Panc1 (cell line): ENCODE measurements at regions of chr17 and their contacts with region 1.

Region 1: DNA sequence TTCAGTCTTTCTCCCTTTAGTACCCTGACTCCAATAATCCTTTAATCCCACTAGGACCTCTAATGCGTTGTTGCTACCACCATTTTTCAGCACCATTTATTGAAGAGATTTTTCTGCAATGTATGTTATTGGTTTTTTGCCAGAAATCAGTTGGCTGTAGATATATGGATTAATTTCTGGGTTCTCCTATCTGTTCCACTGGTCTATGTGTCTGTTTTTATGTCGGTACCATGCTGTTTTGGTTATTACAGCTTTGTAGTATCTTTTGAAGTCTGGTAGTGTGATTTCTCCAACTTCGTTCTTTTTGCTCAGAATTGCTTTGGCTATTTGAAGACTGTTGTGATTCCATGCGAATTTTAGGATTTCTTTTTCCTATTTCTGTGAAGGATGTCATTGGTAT is 16.6 kb downstream of the TANC2 start:
- DNase-seq: no peak
- ATAC-seq: no peak
- H3K4me3 ChIP-seq: no peak overlapping the region
- H3K27ac ChIP-seq: no peak overlapping the region
- H3K4me1 ChIP-seq: peaks cover 3% of the 10 kb centered on the region; the same call in 1 of the 2 replicates
- H3K27me3 ChIP-seq: no peaks in the 10 kb centered on the region
- CTCF ChIP-seq: no peak

Region 2: DNA sequence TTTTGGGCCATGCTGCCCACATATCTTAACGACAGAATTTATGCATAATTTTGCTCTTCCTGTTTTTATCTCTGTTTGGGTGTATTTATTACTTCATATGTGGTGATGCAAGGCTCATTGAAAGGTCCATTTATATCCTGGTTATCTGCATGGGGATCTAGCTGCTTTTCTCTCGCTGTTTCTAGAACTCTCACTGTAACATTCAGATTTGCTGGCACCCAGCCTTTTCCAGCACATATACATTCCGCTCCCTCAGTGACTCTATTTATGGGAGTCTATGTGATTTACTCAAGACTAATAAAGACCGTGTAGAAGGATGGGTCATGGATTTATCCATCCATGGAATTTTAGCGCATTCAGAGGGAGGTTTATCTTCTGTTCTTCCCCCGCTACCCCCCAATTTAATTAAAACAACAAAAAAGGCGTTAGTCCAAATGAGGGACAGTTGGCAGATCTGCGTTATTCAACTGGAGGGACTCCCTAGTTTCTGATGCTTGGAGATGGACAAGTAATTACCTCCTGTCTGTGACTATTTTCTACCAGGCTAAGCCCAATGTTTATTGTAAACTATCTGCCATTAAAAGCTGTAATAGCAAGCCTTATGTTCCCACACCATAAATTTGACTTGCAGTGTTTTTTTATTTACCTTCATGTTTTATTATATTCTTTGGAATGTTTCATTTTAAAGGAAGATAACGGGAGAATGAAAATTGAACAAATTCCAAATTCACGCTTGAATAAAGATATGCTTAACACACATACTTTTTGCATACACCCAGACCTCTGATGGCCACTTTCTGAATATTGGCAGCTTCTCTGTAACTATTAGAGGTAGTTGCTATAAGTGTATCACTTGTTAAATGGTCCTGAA is 154.6 kb before region 1 on chr17:
- CTCF ChIA-PET with region 1: no interaction called
- POLR2A ChIA-PET with region 1: no interaction called
- in situ Hi-C with region 1: no loop called
- intact Hi-C with region 1: no loop called
- DNase-seq: no peak
- ATAC-seq: peak; percentile 82
- H3K4me3 ChIP-seq: peak overlapping the region; percentile 2 to 38; a peak in 2 of 4 replicates
- H3K27ac ChIP-seq: peak overlapping the region; percentile 75
- H3K4me1 ChIP-seq: peaks cover 26% of the 10 kb centered on the region
- H3K27me3 ChIP-seq: no peaks in the 10 kb centered on the region
- CTCF ChIP-seq: no peak

Region 3: GRCh38 chr17:63001451-63002312 is 19.1 kb after region 1 on chr17:
- CTCF ChIA-PET with region 1: no interaction called
- POLR2A ChIA-PET with region 1: interaction called, 10 read pairs
- in situ Hi-C with region 1: no loop called
- intact Hi-C with region 1: no loop called
- DNase-seq: no peak
- ATAC-seq: no peak
- H3K4me3 ChIP-seq: no peak overlapping the region
- H3K27ac ChIP-seq: no peak overlapping the region
- H3K4me1 ChIP-seq: peaks cover 2% of the 10 kb centered on the region; the same call in 1 of the 2 replicates
- H3K27me3 ChIP-seq: no peaks in the 10 kb centered on the region
- CTCF ChIP-seq: no peak